ENCODE measurements at regions of chr2 and their contacts with region 1.

Region 1: GRCh38 chr2:120231974-120232635 is 8.9 kb upstream of the TMEM185B start:
- DNase-seq: peak; percentile 83
- ATAC-seq: peak; percentile 88
- H3K4me3 Mint-ChIP-seq: peak overlapping the region; percentile 80
- H3K27ac Mint-ChIP-seq: peak overlapping the region; percentile 95
- H3K4me1 Mint-ChIP-seq: peaks cover 52% of the 10 kb centered on the region
- H3K27me3 Mint-ChIP-seq: no peaks in the 10 kb centered on the region

Region 2: DNA sequence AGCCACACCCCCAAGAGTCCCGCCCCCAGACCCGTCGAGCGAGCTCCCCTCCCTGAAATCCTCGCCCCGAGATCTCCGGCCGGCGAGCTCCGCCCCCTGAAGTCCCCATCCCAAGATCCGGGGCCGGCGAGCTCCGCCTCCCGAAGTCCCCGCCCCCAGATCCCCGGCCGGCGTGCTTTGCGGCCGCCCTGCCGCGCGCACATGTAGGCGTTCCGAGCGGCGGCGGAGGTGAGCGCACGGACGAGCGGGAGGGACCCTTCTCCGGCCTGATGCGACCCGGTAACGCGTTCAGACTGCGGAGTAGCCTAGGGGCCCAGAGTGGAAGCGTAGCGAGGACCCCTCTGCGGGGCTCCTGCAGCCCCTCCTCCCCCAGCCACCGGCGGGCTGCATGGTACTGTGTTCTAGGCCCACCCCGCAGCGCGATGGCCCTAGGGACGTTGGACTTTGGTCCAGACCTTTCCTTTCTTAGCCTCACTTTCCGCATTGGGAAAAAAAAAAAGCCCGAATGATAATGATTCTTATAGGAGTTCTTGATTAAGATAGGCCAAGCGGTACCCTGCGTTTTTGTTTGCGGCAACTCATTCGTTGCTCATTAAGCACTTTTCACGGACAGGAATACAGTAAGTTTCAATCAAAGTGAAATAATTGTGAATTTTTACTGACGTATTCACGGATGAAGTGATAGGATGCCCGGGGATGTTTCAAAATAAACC is 553.0 kb before region 1 on chr2 and contains the start of gene TMEM177:
- CTCF ChIA-PET with region 1: no interaction called
- POLR2A ChIA-PET with region 1: no interaction called
- intact Hi-C with region 1: loop called in 1 of 2 experiments (anchors 1 kb)
- DNase-seq: peak; percentile 94
- ATAC-seq: peak; percentile 93
- H3K4me3 Mint-ChIP-seq: peak within 1 kb of the TSS; percentile 87
- H3K27ac Mint-ChIP-seq: peak within 1 kb of the TSS; percentile 88
- H3K4me1 Mint-ChIP-seq: peaks cover 33% of the 10 kb centered on the region
- H3K27me3 Mint-ChIP-seq: no peaks in the 10 kb centered on the region
- total RNA-seq, gene TMEM177: 13.6 to 15.8 TPM

Region 3: GRCh38 chr2:119702918-119703401 is 529.1 kb before region 1 on chr2:
- CTCF ChIA-PET with region 1: no interaction called
- POLR2A ChIA-PET with region 1: no interaction called
- intact Hi-C with region 1: loop called in 1 of 2 experiments (anchors 5 kb)
- DNase-seq: peak; percentile 82
- ATAC-seq: peak; percentile 81
- H3K4me3 Mint-ChIP-seq: no peak overlapping the region
- H3K27ac Mint-ChIP-seq: no peak overlapping the region
- H3K4me1 Mint-ChIP-seq: peaks cover 21% of the 10 kb centered on the region
- H3K27me3 Mint-ChIP-seq: no peaks in the 10 kb centered on the region

Region 4: DNA sequence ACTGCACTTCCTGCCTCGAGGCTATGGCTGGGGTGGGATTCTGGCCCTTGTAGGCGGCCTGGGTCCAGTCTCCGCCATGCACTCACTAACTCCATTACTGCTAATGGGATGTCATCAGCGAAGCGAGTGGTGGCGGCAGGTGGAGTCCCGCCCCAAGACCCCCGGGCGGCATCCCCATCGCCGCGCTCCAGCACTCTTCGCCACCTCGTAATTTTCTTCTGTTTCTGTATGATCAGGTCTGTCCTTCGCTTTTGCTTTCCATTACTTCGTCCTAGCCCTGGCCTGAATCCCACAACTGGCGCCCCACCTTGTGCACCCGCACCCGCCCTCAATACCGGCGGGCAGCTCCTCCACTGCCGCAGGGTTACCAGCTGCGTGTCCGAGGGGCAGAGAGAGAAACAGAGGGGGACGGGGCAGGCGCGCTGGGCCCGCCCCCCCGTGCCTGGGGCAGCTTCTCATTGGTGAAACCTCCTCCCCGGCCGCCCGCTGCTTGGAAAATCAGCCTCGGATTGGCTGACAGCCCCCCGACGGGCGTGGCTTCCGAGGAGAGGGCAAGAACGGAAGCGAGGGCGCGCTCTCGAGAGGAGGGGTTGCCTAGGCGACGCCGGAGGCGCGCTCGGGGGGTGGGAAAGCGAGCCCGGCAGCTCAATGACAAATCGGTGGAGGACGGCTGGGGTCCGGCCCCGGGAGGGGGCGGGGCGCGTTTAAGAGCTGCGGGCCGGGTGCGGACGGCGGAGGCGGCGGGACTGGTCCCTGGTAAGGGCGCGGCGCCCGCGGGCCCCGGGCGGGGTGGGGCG is 20.3 kb after region 1 on chr2 and contains the start of gene RALB:
- CTCF ChIA-PET with region 1: interaction called, 5 read pairs
- POLR2A ChIA-PET with region 1: interaction called, 3 read pairs
- intact Hi-C with region 1: loop called (anchors 1 kb)
- DNase-seq: peak; percentile 100
- ATAC-seq: peak; percentile 95
- H3K4me3 Mint-ChIP-seq: peak within 1 kb of the TSS; percentile 92
- H3K27ac Mint-ChIP-seq: peak within 1 kb of the TSS; percentile 86
- H3K4me1 Mint-ChIP-seq: peaks cover 41% of the 10 kb centered on the region
- H3K27me3 Mint-ChIP-seq: peaks cover 6% of the 10 kb centered on the region
- total RNA-seq, gene RALB: 34.0 to 34.3 TPM

Region 5: GRCh38 chr2:120261387-120262006 is 29.4 kb after region 1 on chr2:
- CTCF ChIA-PET with region 1: interaction called, 3 read pairs
- POLR2A ChIA-PET with region 1: no interaction called
- intact Hi-C with region 1: loop called (anchors 2 to 5 kb)
- DNase-seq: peak; percentile 77
- ATAC-seq: peak; percentile 98
- H3K4me3 Mint-ChIP-seq: no peak overlapping the region
- H3K27ac Mint-ChIP-seq: no peak overlapping the region
- H3K4me1 Mint-ChIP-seq: peaks cover 30% of the 10 kb centered on the region
- H3K27me3 Mint-ChIP-seq: no peaks in the 10 kb centered on the region

Region 6: DNA sequence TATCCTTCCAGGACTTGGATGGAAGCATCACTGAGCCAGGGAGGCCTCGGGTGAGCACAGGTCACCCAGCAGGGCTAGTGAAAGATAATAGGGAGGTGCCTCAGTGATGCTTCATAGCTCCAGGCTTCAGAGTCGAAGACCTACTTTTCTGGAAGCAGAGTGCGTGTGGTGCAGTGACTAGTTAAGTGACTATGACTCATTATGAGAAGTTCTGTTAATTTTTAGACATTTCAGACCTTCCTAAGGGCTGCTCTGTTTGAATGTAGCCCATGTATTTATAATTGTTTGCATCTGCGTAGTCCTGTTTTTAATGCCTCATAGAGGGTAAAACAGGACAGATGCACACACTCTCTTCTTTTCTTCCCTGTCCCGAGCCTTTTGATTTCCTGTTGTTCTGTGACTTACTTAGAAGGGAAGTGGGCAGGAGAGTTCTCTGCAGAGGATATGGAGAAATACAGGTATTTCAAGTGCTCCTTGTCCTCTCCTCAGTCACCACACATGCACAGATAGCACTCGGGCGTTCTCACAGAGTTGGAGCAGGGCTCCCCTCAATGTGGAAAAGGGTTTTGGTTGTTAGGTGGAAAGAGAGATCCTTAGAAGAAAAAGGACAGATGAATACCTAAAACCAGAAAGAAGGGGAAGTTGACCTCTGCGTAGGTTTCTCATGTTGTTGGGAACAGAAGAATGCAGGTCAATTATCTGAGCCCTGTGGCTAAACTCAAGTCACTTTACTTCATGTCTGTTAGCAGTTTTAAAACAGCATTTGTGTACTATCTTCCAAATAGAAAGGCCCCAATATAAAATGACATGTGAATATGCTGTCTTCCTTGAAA is 55.3 kb after region 1 on chr2:
- CTCF ChIA-PET with region 1: no interaction called
- POLR2A ChIA-PET with region 1: no interaction called
- intact Hi-C with region 1: loop called in 1 of 2 experiments (anchors 1 kb)
- DNase-seq: peak; percentile 63
- ATAC-seq: peak; percentile 97
- H3K4me3 Mint-ChIP-seq: no peak overlapping the region
- H3K27ac Mint-ChIP-seq: peak overlapping the region; percentile 79
- H3K4me1 Mint-ChIP-seq: peaks cover 29% of the 10 kb centered on the region
- H3K27me3 Mint-ChIP-seq: no peaks in the 10 kb centered on the region

Measured in activated CD4-positive, alpha-beta T cell treated with anti-CD3 and anti-CD28 coated beads for 36 hours (primary cell).